Activated T-helper 1 cell treated with anti-CD3 and anti-CD28 coated beads, Interleukin-12 subunit alpha, Interleukin-12 subunit beta, Interleukin-2, Interleukin-4 antibody, amounts not matched to agents 30 ng/mL and 10 ng/mL and 1 ng/mL, durations not matched to agents 14 hours and 24 hours and 36 hours (primary cell): ENCODE measurements at regions of chr12 and their contacts with region 1.

Region 1: DNA sequence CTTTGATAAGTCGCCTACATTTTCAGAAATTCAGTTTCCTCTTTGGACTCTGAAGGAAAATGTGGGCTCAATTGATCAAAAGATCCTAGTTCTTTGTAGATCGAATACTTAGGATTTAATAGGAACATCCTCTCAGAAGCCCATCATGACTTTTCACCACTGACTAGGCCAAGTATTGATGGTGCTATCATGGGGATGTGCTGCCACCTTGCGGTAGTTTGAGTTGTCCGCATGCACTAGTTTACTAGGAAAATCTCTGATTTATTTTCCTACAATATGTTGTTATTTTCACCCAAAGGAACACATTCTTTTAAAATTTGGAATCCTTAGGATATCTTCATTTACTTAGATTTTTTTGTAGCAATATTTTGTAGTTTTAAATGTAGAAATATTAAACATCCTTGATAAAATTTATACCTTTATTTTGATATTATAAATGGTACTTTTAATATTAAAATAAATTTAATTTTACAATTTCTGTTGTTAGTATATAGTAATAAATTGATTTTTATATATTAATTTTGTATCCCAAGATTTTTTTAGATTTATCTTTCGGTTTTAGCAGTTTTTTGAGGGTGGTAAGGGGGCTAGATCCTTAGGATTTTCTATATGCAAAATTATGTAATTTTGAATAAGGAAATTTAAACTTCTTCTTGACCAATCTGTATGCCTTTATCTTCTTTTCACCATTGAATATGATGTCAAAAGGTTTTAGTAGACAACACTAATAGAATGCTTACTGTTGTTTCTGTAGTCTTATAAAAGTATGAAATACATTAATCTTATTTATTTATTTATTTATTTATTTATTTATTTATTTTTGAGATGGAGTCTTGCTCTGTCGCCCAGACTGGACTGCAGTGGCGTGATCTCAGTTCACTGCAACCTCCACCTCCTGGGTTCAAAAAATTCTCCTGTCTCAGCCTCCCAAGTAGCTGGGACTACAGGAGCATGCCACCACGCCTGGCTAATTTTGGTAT is 52.9 kb upstream of the OR9K2 start:
- DNase-seq: peak; percentile 57
- H3K4me3 Mint-ChIP-seq: no peak overlapping the region
- H3K27ac Mint-ChIP-seq: no peak overlapping the region
- H3K4me1 Mint-ChIP-seq: peaks cover 11% of the 10 kb centered on the region
- H3K27me3 Mint-ChIP-seq: peaks cover 29% of the 10 kb centered on the region

Region 2: DNA sequence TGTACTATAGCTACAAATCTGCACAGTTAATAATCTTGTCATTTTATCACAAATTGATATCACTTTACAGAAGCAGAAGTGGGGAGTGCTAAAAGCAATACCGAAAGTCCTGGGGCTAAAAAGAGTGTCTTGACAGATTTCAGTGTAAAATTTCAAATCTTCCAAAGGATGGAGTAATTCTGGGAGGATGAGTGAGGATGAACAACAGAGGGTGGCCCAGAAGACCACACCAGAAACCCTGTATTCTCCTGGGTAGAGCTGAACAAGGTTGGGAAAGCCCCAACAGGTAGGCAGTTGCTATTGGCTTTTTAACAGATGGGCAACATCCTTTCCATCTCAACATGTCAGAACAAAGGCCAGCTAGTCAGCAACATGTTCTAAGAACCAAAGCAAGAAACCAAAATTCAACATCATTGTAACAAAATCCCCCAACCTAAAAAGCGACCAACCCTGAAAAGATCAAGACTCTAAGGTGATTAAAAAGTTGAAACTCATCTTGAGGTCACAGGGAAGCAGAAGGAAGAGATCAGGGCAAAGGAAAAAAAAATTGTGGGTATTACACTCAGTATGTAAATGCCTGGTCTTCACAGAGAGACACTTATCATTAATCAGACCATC is 832.3 kb before region 1 on chr12:
- intact Hi-C with region 1: no loop called
- DNase-seq: no peak
- H3K4me3 Mint-ChIP-seq: peak overlapping the region; percentile 19
- H3K27ac Mint-ChIP-seq: peak overlapping the region; percentile 88
- H3K4me1 Mint-ChIP-seq: peaks cover 34% of the 10 kb centered on the region
- H3K27me3 Mint-ChIP-seq: no peaks in the 10 kb centered on the region

Region 3: DNA sequence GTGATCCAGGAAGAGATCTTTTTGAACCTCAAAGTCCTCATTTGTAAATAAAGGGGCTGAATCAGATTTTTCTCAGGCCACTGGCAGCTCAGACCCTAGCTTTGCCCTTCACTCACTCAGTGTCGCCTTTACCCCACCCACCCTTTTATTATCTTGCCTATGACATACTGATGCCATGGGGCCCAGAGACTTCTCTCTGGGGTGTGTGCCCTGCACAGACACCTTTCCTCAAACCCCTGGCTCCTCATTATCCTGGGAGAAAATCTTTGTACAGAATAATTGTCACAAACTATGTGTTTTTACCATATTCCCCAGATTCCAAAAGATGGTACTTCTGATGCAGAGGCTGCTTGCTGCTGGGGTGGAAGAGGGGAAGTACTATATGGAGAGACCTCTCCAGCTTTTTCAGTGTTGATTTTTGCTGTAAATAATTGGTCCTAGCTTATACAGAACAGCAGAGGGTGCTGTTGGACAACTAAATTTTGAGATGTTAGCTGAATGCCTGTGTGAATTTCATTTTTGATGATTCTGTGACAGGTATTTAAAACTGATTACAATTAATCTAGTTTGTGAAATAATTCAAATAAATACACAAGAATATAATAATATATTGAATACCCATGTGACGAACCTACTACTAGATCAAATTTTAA is 371.3 kb before region 1 on chr12:
- intact Hi-C with region 1: loop called (anchors 1 kb)
- DNase-seq: no peak
- H3K4me3 Mint-ChIP-seq: no peak overlapping the region
- H3K27ac Mint-ChIP-seq: no peak overlapping the region
- H3K4me1 Mint-ChIP-seq: no peaks in the 10 kb centered on the region
- H3K27me3 Mint-ChIP-seq: peaks cover 10% of the 10 kb centered on the region

Region 4: GRCh38 chr12:54749191-54749818 is 324.0 kb before region 1 on chr12:
- intact Hi-C with region 1: loop called (anchors 1 kb)
- DNase-seq: peak; percentile 31
- H3K4me3 Mint-ChIP-seq: no peak overlapping the region
- H3K27ac Mint-ChIP-seq: no peak overlapping the region
- H3K4me1 Mint-ChIP-seq: peaks cover 21% of the 10 kb centered on the region
- H3K27me3 Mint-ChIP-seq: peaks cover 5% of the 10 kb centered on the region

Region 5: GRCh38 chr12:54993161-54993835 is 80.0 kb before region 1 on chr12:
- intact Hi-C with region 1: loop called (anchors 1 kb)
- DNase-seq: peak; percentile 41
- H3K4me3 Mint-ChIP-seq: no peak overlapping the region
- H3K27ac Mint-ChIP-seq: no peak overlapping the region
- H3K4me1 Mint-ChIP-seq: peaks cover 46% of the 10 kb centered on the region
- H3K27me3 Mint-ChIP-seq: no peaks in the 10 kb centered on the region

Region 6: GRCh38 chr12:55126106-55126505 is 52.8 kb after region 1 on chr12 and contains the start of gene OR9K2:
- intact Hi-C with region 1: no loop called
- DNase-seq: no peak
- H3K4me3 Mint-ChIP-seq: no peak within 1 kb of the TSS
- H3K27ac Mint-ChIP-seq: no peak within 1 kb of the TSS
- H3K4me1 Mint-ChIP-seq: no peaks in the 10 kb centered on the region
- H3K27me3 Mint-ChIP-seq: peaks cover 3% of the 10 kb centered on the region
- total RNA-seq, gene OR9K2: not detected in 2 replicates

Region 7: DNA sequence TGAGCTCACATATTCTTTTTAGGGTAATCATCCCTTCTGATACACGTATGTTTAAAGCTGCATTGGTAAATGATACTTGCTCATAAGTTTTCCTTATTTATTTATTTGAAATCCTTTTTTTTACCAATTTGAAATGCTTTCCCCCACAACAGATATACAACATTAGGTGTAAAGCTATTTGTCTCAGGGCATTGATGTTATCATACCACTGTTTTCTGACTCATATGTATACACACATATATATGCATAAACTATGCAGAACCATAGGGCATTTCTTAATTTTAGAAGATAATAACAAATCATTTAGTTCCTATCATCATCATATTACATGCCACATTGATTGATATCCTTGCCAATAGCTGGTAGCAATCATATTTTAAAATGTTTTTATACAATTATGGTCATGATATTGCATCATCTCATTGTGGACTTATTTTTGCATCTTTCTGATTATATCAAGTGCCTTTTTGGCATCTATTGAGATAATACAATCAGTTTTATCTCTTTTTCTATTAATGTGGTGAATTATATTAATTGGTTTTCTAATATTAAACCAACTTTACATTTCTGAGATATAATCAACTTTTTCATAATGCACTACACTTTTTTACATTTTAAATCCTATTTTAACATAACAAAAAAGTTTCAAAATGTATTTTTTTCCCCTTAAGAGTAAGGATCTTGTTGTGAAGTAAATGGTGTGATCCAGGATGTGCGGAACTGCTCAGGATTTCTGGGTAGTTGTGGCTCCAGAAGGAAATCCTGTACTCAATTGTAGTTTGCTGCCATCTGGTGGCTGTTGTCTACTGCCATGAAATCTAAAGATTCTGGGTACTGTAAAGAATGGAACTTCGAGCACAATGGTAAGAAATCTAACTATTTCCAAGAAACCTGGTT is 69.6 kb after region 1 on chr12:
- intact Hi-C with region 1: loop called (anchors 1 kb)
- DNase-seq: peak; percentile 9
- H3K4me3 Mint-ChIP-seq: no peak overlapping the region
- H3K27ac Mint-ChIP-seq: no peak overlapping the region
- H3K4me1 Mint-ChIP-seq: no peaks in the 10 kb centered on the region
- H3K27me3 Mint-ChIP-seq: peaks cover 5% of the 10 kb centered on the region

Region 8: DNA sequence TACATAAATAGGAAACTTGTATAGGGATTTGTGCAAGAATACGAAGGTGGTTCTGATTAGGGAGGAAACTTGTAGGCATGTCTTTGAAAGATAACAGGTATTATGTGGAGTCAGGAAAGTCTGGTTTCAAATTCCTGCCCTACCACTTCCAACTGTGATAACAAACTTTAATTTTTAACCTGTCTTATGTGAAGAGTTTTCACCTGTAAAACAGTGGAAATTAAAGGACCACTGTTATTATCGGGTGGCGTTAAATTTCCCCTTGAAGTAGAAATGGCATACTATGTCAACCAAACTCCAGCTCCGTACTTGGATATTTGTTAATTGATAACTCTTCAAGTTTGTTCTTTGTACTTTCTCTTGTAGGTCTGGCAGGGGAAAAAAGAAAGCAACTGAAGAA is 246.9 kb after region 1 on chr12:
- intact Hi-C with region 1: no loop called
- DNase-seq: no peak
- H3K4me3 Mint-ChIP-seq: no peak overlapping the region
- H3K27ac Mint-ChIP-seq: no peak overlapping the region
- H3K4me1 Mint-ChIP-seq: no peaks in the 10 kb centered on the region
- H3K27me3 Mint-ChIP-seq: no peaks in the 10 kb centered on the region

Region 9: DNA sequence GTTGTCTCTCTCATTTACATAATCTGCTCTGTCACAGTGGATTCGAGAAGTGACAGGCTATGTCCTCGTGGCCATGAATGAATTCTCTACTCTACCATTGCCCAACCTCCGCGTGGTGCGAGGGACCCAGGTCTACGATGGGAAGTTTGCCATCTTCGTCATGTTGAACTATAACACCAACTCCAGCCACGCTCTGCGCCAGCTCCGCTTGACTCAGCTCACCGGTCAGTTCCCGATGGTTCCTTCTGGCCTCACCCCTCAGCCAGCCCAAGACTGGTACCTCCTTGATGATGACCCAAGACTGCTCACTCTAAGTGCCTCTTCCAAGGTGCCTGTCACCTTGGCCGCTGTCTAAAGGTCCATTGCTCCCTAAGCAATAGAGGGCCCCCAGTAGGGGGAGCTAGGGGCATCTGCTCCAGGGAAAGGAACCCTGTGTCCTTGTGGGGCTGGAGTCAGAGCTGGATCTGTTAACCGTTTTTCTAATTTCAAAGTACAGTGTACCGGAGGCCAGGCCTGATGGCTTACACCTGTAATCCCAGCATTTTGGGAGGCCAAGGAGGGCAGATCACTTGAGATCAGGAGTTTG is 1011.7 kb after region 1 on chr12:
- intact Hi-C with region 1: no loop called
- DNase-seq: peak; percentile 17
- H3K4me3 Mint-ChIP-seq: no peak overlapping the region
- H3K27ac Mint-ChIP-seq: no peak overlapping the region
- H3K4me1 Mint-ChIP-seq: peaks cover 13% of the 10 kb centered on the region
- H3K27me3 Mint-ChIP-seq: peaks cover 18% of the 10 kb centered on the region